ENCODE measurements at regions of chr3 and their contacts with region 1.

Region 1: DNA sequence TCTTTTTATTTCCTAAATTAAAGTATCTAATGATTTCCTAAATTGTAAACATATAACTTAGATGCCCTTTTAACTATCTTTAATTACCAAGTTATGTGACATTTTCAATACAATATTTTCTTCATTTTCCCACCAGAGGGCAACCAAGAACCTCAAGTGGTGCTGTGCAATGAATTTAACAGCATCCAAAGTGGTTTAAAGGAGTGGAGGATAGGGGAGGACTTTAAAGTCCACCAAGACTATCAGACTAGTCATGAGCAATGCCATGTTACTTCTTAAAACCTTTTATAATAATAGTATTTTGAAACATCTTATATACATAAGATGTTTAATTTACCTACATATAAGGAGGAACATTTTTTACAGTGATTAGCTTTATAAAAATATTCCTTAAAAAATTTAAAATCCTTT is 74.4 kb downstream of the DLG1 start:
- DNase-seq: peak; percentile 57
- CTCF ChIP-seq: peak; percentile 64

Region 2: GRCh38 chr3:197203714-197204146 is 20.3 kb before region 1 on chr3:
- CTCF ChIA-PET with region 1: interaction called, 11 read pairs
- POLR2A ChIA-PET with region 1: no interaction called
- DNase-seq: no peak
- CTCF ChIP-seq: no peak

Region 3: DNA sequence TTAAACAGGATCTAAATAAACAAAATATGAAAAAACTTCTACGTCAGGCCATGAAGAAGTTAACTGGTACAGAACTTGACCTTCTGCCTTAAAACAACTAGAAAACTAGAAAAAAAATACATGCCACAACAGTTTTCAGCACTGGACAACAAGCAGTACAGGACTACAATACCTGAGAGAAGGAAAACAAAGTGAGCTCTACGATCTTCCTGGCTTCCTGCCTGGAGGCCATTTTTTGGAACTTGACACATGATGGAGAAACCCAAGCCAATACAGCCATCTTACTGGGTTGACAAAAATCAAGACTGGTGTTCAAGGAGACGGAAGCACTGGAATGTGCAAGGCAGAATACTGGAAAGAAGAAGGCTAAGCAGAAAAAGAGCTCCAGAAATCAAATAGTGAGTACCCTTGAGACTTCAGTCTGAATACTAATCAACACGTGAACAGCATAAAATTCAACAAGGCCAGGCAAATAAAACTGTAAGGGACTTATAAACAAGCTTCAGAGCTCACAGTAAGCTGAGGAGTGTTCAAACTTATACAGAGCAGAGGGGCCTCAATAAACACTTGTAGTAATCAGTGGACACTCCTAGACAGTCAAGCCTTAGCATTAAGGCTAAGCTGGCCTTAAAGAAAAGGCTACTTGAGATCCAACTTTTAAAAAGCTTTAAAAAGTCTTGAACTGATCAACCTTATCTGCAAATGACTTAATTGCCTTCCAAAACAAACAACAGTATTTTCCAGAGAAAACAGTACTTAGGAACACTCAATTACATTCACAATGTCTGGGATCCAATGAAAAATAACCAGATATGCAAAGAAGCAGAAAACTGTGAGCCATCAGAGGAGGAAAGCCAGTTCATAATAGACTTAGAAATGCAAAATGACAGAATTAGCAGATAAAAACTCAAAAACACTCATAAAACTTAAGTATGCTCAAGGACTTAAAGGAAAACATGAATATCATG is 11.2 kb after region 1 on chr3:
- CTCF ChIA-PET with region 1: interaction called, 50 read pairs
- POLR2A ChIA-PET with region 1: no interaction called
- DNase-seq: no peak
- CTCF ChIP-seq: no peak

Region 4: GRCh38 chr3:197501879-197502620 is 278.0 kb after region 1 on chr3:
- CTCF ChIA-PET with region 1: interaction called, 14 read pairs
- POLR2A ChIA-PET with region 1: no interaction called
- DNase-seq: peak; percentile 71
- CTCF ChIP-seq: peak; percentile 55

Region 5: GRCh38 chr3:197511130-197511529 is 287.1 kb after region 1 on chr3:
- CTCF ChIA-PET with region 1: interaction called, 16 read pairs
- POLR2A ChIA-PET with region 1: no interaction called
- DNase-seq: no peak
- CTCF ChIP-seq: no peak

Region 6: GRCh38 chr3:197580253-197580691 is 356.2 kb after region 1 on chr3:
- CTCF ChIA-PET with region 1: no interaction called
- POLR2A ChIA-PET with region 1: no interaction called
- DNase-seq: no peak
- CTCF ChIP-seq: no peak

Measured in GM10248 (cell line).